HepG2 (cell line): ENCODE measurements at regions of chr7 and their contacts with region 1.

Region 1: GRCh38 chr7:141754939-141755338 is 9.0 kb upstream of the TAS2R3 start:
- DNase-seq: peak; percentile 46
- ATAC-seq: peak; percentile 68
- H3K4me3 ChIP-seq: no peak overlapping the region
- H3K27ac ChIP-seq: no peak overlapping the region
- H3K4me1 ChIP-seq: no peaks in the 10 kb centered on the region
- H3K27me3 ChIP-seq: no peaks in the 10 kb centered on the region
- CTCF ChIP-seq: peak; percentile 63
- EP300 ChIP-seq: no peak
- POLR2A ChIP-seq: no peak
- RAD21 ChIP-seq: no peak

Region 2: DNA sequence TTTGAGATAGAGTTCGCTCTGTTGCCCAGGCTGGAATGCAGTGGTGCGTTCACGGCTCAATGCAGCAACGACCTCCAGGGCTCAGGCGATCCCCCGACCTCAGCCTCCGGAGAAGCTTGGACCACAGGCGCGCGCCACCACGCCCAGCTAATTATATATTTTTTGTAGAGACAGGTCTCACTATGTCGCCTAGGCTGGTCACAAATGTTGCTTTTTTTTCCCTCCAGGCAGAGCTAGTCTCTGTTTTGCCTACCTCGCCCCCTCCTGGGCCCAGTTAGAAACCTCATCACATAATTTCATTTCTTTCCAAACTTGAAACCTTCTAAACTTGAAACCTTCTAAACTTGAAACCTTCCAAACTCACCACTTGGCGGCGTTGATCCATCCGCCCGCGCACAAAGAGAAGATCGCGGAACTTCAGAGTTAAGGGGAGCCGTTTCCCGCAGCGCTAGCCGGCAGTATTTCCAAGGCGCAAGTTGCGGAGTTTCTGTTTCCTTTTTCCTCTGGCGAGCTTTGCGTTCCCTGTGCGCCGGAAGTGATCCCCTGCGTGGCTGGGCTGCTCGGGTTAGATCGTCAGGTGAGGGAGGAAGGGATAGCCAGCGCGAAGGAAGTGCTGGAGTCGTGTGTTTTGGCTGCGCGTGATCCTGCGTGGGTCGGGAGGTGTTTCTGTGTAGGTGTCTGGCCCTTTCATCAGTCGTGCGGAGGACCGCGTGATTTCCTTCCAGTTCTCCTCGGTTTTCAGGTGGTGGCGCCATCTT is 16.9 kb before region 1 on chr7 and contains the start of gene SSBP1:
- CTCF ChIA-PET with region 1: no interaction called
- POLR2A ChIA-PET with region 1: no interaction called
- in situ Hi-C with region 1: no loop called
- intact Hi-C with region 1: no loop called
- DNase-seq: peak; percentile 94
- ATAC-seq: peak; percentile 95
- H3K4me3 ChIP-seq: peak within 1 kb of the TSS; percentile 84 to 93 (median 85)
- H3K27ac ChIP-seq: peak within 1 kb of the TSS; percentile 81
- H3K4me1 ChIP-seq: peaks cover 29% of the 10 kb centered on the region
- H3K27me3 ChIP-seq: no peaks in the 10 kb centered on the region; a peak in 1 of 5 replicates
- CTCF ChIP-seq: peak; percentile 84
- EP300 ChIP-seq: peak; percentile 48 to 70; a peak in 2 of 4 replicates
- POLR2A ChIP-seq: peak; percentile 94 to 97
- RAD21 ChIP-seq: no peak
- total RNA-seq, gene SSBP1: 254 and 363 TPM in 2 replicates

Region 3: DNA sequence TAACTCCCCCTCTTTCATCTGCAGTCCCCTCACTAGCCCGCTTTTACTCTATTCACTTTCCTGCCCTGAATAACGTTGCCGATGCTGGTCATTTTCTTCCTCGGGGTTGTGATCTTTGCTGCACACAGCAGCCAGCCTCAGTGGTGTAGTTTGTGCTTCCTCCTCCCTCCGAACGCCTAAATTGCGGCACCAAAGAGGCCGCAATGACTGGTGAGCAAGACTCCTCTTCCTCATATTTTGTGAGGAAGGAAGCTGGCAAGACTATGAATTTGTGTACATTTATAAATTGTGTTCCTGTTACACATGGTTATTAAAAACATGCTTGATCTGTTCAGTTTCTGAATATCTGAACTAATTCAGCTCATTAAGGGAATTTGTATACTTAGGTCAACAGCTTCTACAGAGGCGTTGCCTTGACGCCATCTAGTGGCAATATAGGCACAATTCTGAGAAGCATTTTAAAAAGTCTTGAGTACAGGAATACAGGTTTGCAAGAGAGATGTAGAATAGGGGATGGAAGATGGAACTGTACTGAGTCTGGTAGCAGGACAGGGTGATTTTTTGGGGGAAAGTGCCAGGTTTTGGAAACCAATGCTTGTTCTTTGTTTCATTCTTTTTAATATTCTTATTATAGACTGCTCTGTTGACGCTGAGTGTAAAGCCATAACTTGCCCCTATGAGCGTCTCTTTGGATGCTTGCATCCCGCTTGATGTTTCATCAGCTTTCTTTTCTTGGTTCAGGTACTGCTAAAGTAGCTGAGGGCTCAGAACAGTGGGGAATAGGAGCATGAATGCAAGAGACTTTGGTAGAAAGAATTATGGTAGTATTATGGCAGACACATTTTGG is 31.0 kb after region 1 on chr7:
- CTCF ChIA-PET with region 1: interaction called, 6 read pairs
- POLR2A ChIA-PET with region 1: no interaction called
- in situ Hi-C with region 1: no loop called
- intact Hi-C with region 1: loop called (anchors 2 kb)
- DNase-seq: peak; percentile 42
- ATAC-seq: peak; percentile 83
- H3K4me3 ChIP-seq: no peak overlapping the region
- H3K27ac ChIP-seq: no peak overlapping the region
- H3K4me1 ChIP-seq: no peaks in the 10 kb centered on the region
- H3K27me3 ChIP-seq: no peaks in the 10 kb centered on the region
- CTCF ChIP-seq: peak; percentile 72
- EP300 ChIP-seq: no peak
- POLR2A ChIP-seq: no peak
- RAD21 ChIP-seq: peak; percentile 17; the same call in 1 of the 2 replicates